ENCODE measurements at regions of chr11 and their contacts with region 1.

Region 1: DNA sequence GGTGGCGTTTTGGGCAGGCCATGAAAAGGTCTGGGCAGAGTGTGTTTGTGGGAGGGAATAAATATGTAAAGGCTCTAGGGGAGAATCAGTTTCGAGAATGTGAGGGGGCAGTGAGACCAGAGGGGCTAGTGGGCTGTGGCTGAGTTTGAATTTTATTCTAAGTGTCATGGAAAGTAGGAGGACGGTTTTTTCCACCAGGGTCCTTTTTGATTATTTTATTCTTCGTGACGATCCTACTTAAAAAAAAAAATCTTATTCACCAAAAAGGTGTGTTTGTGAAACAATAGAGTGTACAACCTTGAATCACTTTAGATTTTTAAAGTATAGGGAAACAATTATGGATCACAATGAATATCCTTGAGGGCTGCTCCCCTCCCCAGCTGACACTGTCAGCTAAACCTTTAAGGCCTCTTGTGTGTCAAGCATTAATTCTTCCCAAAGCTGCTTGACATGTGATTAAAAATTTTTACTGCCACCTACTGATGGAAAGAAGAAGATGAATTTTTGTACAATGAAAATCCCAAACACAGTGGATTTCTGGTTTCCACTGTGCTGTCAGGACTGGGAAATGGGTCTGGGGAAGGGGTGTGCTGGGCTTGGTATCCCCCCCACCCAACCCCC is 107.5 kb upstream of the OR4B1 start:
- DNase-seq: peak; percentile 22 to 88
- H3K4me3 ChIP-seq: no peak overlapping the region; the same call in 1 of the 2 replicates
- H3K4me1 ChIP-seq: peaks cover 21% of the 10 kb centered on the region
- H3K27me3 ChIP-seq: no peaks in the 10 kb centered on the region

Region 2: GRCh38 chr11:47938791-47939560 is 170.2 kb before region 1 on chr11:
- in situ Hi-C with region 1: loop called (anchors 5 kb)
- DNase-seq: peak; percentile 65 to 86
- H3K4me3 ChIP-seq: no peak overlapping the region
- H3K4me1 ChIP-seq: peaks cover 26% of the 10 kb centered on the region
- H3K27me3 ChIP-seq: no peaks in the 10 kb centered on the region

Region 3: DNA sequence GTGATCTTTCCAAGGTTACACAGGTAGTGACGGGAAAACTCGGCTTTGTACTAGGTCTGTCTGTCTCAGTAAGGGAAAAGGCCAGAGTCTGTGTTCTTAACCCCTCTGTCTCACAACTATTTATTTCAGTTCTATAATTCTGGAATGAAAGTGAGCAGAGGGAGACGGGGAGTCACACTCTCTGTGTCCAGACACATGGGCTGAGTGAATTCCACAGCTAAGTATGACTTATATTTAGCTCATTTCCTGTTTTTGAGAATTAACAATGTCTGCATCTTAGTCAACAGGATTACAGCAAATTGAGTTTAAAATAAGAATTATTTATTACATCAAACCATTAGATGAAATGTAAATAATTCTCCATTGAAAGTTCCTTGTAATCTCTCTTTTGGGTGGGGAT is 45.0 kb after region 1 on chr11:
- in situ Hi-C with region 1: no loop called
- DNase-seq: no peak
- H3K4me3 ChIP-seq: no peak overlapping the region
- H3K4me1 ChIP-seq: no peaks in the 10 kb centered on the region
- H3K27me3 ChIP-seq: no peaks in the 10 kb centered on the region

Measured in HAP-1 (cell line).